Right ventricle myocardium superior (tissue), 1 donor: ENCODE measurements at regions of chr18 and their contacts with region 1.

Region 1: DNA sequence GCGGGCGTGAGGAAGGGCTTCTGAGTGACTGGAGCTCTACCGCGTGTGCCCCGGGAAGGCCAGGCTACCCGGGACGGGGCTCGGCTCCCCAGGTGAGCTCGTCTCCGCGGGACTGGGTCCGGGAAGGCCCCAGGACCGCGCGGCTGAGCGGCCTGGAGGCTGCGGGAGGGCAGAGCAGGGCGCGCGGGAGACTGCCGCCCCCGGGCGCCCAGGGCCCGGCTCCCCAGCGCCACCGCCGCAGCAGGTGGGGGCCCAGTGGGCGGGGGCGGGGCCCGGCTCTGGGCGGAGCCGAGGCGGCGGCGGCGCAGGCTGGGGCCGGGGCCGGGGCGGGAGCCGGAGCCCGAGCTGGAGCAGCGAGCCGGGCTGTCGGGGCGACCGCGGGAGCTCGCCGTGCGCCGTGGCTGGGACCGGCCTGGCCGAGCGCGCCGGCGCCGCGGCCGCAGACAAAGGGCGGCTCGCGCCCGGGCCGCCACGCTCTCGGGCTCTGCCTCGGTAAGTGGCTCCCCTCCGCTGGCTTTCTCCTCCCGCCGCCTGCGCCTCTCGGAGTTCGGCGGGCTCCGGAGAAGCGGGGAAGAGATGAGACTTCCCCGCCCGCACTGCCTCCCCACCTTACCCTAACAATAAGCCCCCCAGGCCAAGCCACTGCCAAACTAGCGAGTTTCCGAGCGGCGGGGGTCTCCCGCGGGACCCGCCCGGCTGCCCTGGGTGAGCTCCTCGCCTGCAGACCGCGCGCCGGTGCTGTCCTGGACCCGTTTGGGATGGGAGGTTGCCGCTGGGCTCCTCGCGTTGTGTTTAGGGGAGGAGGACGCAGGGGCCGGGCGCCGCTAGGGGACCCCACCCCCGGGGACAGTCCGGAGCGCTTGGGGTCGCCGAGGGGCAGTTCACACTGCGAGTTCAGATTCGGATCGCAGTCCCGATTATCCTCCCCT is at the start of gene MAPK4:
- DNase-seq: peak; percentile 66
- ATAC-seq: peak; percentile 94
- total RNA-seq, gene MAPK4: 26.9 TPM

Region 2: DNA sequence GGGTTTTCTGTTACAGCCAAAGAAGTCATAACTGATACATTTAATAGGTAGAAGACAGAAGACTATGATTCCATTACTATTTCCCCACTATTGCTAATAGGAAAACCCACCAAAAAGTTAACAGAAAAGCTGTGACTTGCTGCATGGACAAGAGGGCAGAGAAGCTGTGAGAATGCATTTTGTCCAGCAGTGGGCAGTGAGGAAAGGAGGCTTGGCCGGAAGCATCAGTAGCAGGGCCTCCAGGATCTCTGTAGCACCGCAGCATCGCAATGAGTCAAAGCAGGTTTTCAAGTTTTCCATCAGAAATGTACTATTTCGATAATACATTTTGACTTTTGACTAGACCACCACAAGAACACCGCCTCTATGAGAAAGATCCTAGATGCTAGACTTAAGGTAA is 390.0 kb before region 1 on chr18:
- intact Hi-C with region 1: no loop called
- DNase-seq: no peak
- ATAC-seq: no peak

Region 3: GRCh38 chr18:50629148-50629631 is 69.2 kb after region 1 on chr18:
- intact Hi-C with region 1: no loop called
- DNase-seq: no peak
- ATAC-seq: no peak

Region 4: DNA sequence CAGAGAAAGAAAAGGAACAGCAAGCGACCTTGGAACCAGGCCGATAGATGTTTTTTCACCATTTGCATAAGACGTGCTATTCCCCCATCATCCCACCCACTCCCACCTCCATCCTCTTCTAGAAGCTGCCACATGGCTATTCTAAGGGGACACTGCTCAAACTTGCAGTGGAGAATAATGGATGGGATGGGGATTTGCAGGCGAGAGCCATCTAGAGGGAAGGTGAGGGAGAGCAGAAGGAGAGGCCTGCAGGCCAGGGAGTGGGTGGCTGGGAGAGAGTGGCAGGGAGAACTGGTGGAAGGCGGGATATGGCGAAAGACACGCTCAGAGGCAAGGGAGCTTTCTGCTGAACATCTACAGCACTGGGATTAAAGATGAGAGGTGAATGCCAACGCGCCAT is 84.8 kb after region 1 on chr18:
- intact Hi-C with region 1: loop called (anchors 10 kb)
- DNase-seq: no peak
- ATAC-seq: no peak